Ascending aorta (tissue), 2 donors: ENCODE measurements at regions of chr2 and their contacts with region 1.

Region 1: GRCh38 chr2:36785179-36785795 is 88.8 kb downstream of the VIT start:
- DNase-seq: peak in 1 of 2 donors; percentile 69
- H3K4me3 ChIP-seq: no peak overlapping the region
- H3K27ac ChIP-seq: no peak overlapping the region
- H3K4me1 ChIP-seq: no peaks in the 10 kb centered on the region
- H3K27me3 ChIP-seq: no peaks in the 10 kb centered on the region
- CTCF ChIP-seq: peak; percentile 58 to 94 (median 88)

Region 2: DNA sequence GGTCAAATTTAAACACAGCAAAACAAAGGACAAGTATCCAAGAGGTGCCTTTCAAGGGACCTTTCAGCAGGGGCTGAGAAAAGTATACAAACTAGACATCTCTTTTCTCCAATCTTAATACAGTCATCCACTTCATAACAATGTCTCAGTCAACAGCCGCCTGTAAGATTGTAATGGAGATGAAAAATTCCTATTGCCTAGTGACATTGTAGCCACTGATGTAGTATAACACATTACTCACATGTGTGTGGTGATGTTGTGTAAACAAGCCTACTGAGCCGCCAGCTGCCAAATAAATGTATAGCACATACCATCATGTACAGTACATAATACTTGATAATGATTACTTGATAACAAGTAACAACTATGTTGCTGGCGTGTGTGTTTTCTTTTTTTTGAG is 57.7 kb before region 1 on chr2:
- intact Hi-C with region 1: no loop called
- DNase-seq: no peak
- H3K4me3 ChIP-seq: no peak overlapping the region
- H3K27ac ChIP-seq: no peak overlapping the region
- H3K4me1 ChIP-seq: no peaks in the 10 kb centered on the region
- H3K27me3 ChIP-seq: no peaks in the 10 kb centered on the region
- CTCF ChIP-seq: no peak

Region 3: DNA sequence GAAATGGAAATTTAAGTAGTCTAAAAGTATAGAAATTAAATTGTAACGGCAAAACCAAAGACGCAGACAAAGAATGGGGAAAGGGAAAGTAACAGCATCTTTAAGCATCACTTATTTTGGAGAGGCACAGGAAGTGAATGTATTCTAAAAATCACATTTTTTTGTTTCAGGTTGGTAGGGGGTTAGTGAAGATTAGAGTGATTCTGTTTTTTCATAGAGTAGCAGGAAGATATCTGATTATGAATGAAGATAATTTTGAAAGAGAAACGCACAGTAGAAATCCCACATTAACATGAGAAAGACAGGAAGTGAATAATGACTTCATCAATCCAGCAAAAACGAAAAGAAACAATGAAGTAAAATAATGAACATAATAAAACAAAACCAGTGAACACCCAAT is 49.8 kb after region 1 on chr2:
- intact Hi-C with region 1: no loop called
- DNase-seq: no peak
- H3K4me3 ChIP-seq: no peak overlapping the region
- H3K27ac ChIP-seq: no peak overlapping the region
- H3K4me1 ChIP-seq: no peaks in the 10 kb centered on the region
- H3K27me3 ChIP-seq: no peaks in the 10 kb centered on the region
- CTCF ChIP-seq: no peak

Region 4: DNA sequence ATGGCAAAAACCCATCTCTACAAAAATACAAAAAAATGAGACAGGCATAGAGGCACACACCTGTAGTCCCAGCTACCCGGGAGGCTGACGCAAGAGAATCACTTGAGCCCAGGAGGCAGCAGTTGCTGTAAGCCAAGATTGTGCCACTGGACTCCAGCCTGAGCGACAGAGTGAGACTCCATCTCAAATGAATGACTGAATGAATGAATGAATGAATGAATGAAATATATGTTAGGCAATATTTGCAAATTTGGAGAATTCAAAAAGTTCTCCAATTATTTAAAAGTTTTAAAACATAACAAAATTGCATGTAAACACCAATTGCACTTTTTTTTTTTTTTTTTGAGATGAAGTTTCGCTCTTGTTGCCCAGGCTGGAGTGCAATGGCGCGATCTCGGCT is 119.4 kb after region 1 on chr2:
- intact Hi-C with region 1: no loop called
- DNase-seq: no peak
- H3K4me3 ChIP-seq: no peak overlapping the region
- H3K27ac ChIP-seq: no peak overlapping the region
- H3K4me1 ChIP-seq: no peaks in the 10 kb centered on the region
- H3K27me3 ChIP-seq: no peaks in the 10 kb centered on the region
- CTCF ChIP-seq: no peak

Region 5: DNA sequence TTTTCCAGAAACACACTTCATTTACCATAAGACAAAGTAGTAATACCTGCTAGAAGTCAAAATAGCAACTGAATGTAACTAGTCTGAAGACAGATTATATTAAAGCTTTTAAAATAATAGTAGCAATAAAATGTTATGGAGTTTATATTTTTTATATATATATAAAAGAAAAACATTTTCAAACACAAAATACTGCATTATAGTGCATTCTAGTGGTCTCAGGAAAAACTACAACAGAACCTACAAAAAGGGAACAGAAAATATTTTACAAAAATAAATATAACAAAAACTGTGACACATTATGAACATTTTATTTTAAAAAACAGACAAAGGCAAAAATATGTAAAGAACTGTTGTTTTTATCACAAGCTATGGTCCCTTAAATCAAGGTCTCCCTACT is 133.0 kb after region 1 on chr2:
- intact Hi-C with region 1: loop called (anchors 10 kb)
- DNase-seq: no peak
- H3K4me3 ChIP-seq: no peak overlapping the region
- H3K27ac ChIP-seq: no peak overlapping the region
- H3K4me1 ChIP-seq: no peaks in the 10 kb centered on the region
- H3K27me3 ChIP-seq: no peaks in the 10 kb centered on the region
- CTCF ChIP-seq: peak in 1 of 3 experiments; percentile 34

Region 6: DNA sequence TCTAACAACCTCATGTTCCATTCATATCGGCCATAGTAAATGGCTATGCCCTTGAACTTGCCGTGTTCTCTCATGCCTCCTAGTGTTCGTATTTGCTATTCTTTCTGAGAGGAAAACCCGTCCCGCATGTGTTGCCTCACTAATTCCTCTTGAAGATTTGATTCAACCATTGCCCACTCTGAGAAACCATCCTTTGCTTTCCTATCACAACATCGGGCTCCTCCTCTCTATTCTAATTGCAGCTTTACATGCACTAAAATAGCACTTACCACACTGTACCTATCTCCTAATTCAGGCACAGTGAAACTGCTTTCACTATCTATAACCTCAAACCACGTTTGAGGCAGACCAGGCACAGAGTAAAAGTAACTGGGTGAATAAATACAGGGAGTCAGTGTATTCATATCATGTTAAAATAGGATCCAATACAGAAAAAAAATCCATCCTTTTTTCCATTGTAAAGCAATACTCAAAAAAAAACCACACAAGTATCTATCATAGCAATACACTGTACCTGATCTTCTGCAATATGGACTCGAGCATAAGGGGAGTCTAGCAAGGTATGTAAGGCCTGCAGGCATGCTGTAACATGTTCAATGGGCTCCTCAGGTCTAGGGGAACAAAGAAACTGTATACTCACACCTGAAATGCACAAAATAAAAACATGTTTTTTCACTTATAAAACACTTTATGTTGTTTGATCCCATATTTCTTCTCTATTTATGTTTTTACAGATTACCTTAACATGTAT is 220.0 kb after region 1 on chr2:
- intact Hi-C with region 1: loop called (anchors 10 kb)
- DNase-seq: no peak
- H3K4me3 ChIP-seq: no peak overlapping the region
- H3K27ac ChIP-seq: no peak overlapping the region
- H3K4me1 ChIP-seq: no peaks in the 10 kb centered on the region
- H3K27me3 ChIP-seq: no peaks in the 10 kb centered on the region
- CTCF ChIP-seq: peak in 2 of 3 experiments; percentile 29 to 42